Head of caudate nucleus (tissue), 42 donors: ENCODE measurements at regions of chr9 and their contacts with region 1.

Region 1: GRCh38 chr9:6305954-6306563 is 22.1 kb upstream of the TPD52L3 start:
- DNase-seq: peak in 2 of 42 donors; percentile 5 to 13

Region 2: GRCh38 chr9:6197330-6197729 is 108.7 kb before region 1 on chr9:
- intact Hi-C with region 1: loop called (anchors 10 kb)
- DNase-seq: peak in 1 of 42 donors; percentile 7

Region 3: GRCh38 chr9:6215562-6215961 is 90.5 kb before region 1 on chr9 and contains the start of gene IL33:
- intact Hi-C with region 1: no loop called
- DNase-seq: peak in 8 of 42 donors; percentile 5 to 41 (median 14)

Region 4: DNA sequence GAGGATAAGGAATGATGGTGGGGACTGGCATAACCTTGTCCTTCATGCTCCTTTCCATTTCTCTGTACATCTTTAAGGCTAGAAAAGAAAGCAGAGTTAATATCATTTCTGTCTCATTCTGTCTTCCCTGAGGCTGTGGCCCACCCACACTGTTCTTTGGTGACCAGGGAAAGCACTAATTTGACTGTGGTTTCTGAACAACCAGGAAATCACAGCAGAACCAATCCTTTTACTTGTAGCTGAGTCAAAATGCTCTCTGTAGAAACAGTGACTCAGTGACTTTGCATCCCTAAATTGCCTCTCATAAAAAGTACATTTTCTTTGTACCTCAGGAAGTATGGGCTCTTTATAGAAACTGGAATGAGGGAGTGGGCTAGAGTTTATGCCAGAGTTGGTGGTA is 62.3 kb before region 1 on chr9:
- intact Hi-C with region 1: no loop called
- DNase-seq: no peak